SK-N-SH (cell line): ENCODE measurements at regions of chr12 and their contacts with region 1.

Region 1: DNA sequence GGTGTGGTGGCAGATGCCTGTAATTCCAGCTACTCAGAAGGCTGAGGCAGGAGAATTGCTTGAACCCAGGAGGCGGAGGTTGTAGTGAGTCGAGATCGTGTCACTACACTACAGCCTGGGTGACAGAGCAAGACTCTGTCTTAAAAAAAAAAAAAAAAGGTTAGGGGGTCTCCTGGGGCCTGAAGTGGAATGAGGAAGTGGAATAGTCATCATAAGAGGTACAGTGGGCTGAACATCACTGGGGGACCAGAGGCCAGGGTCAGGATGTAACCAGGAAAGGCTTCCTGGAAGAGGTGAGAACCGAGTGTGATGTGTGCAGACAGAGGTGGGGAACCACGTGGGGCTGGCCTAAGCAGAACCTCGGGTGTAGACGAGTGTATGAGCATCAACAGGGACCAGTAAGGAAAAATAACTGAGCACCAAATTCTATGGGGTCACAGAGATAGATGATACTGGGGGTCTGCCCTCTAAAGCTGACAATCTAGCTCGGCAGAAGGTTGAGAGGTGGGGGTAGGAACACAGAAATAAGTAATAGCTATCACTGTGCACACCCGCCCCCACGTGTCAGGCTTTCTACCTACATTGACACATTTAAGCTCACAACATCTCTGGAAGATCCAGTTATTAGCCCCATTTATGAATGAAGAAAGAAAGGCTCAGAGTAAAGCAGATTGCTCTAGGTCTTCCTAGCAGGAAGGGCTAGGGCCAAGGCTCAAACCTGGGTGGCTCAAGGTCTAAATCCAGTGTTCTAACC is 5.0 kb upstream of the COX6A1 start:
- DNase-seq: no peak
- H3K4me3 ChIP-seq: no peak overlapping the region
- H3K27ac ChIP-seq: no peak overlapping the region
- H3K4me1 ChIP-seq: no peaks in the 10 kb centered on the region
- H3K27me3 ChIP-seq: no peaks in the 10 kb centered on the region
- CTCF ChIP-seq: no peak
- EP300 ChIP-seq: no peak
- RAD21 ChIP-seq: no peak

Region 2: DNA sequence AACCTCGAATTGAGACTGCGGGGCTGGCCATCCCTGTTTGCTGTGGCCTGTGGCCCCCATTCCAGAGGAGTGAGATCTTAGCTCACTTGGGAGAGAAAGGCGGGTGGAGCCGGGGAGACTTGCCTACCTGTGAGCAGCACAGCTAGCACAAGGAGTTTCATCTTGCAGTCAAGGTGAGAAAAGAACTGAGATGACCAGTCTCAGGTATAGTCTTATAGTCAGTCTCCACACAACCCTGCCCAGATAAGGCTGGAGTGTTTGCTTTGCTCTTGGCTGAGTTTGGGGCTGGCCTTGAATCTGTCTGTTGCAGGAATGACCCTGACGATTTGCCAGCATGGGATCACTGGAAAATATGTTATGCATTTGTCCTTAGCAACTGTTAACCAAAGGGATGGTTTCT is 105.4 kb before region 1 on chr12 and contains the start of gene PLA2G1B:
- CTCF ChIA-PET with region 1: interaction called, 15 read pairs
- POLR2A ChIA-PET with region 1: interaction called, 4 read pairs
- DNase-seq: no peak
- H3K4me3 ChIP-seq: no peak within 1 kb of the TSS
- H3K27ac ChIP-seq: no peak within 1 kb of the TSS
- H3K4me1 ChIP-seq: no peaks in the 10 kb centered on the region
- H3K27me3 ChIP-seq: no peaks in the 10 kb centered on the region; the same call in 1 of the 2 replicates
- CTCF ChIP-seq: no peak
- EP300 ChIP-seq: no peak
- RAD21 ChIP-seq: no peak
- polyA plus RNA-seq, gene PLA2G1B: not detected in 2 replicates

Region 3: DNA sequence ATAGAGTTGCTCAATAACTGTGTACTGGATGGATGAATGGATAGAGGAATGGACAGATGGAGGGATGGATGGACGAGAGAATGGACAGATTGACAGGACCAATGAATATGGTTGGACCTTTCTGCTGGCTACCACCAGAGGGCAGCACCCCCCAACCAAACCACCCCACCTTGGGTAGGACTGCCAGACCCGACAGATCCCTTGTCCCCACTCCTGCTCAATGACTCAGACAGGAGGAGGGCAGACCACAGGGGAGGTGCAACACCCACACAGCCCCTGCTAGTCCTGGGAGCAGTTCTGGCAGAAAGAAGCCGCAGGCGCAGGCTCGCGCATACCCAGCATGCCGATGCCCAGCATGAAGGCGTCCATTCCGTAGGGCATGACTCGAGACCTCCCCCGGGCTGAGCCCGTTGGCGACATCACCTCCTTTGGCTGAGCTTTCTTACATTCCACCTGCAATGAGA is 76.3 kb before region 1 on chr12:
- CTCF ChIA-PET with region 1: interaction called, 95 read pairs
- POLR2A ChIA-PET with region 1: interaction called, 5 read pairs
- DNase-seq: peak; percentile 93
- H3K4me3 ChIP-seq: no peak overlapping the region
- H3K27ac ChIP-seq: no peak overlapping the region
- H3K4me1 ChIP-seq: peaks cover 0 to 5% of the 10 kb centered on the region in 2 experiments; a peak in 1 of 4 replicates
- H3K27me3 ChIP-seq: no peaks in the 10 kb centered on the region
- CTCF ChIP-seq: peak; percentile 93
- EP300 ChIP-seq: 0 out of 4 replicates have a peak, but pooled peaks of 1 of the 2 experiments have one; percentile 19
- RAD21 ChIP-seq: peak; percentile 95

Region 4: GRCh38 chr12:120388691-120389481 is 44.1 kb before region 1 on chr12:
- CTCF ChIA-PET with region 1: interaction called, 10 read pairs
- POLR2A ChIA-PET with region 1: no interaction called
- DNase-seq: no peak
- H3K4me3 ChIP-seq: no peak overlapping the region
- H3K27ac ChIP-seq: no peak overlapping the region
- H3K4me1 ChIP-seq: no peaks in the 10 kb centered on the region
- H3K27me3 ChIP-seq: no peaks in the 10 kb centered on the region; the same call in 1 of the 2 replicates
- CTCF ChIP-seq: no peak
- EP300 ChIP-seq: no peak
- RAD21 ChIP-seq: no peak

Region 5: DNA sequence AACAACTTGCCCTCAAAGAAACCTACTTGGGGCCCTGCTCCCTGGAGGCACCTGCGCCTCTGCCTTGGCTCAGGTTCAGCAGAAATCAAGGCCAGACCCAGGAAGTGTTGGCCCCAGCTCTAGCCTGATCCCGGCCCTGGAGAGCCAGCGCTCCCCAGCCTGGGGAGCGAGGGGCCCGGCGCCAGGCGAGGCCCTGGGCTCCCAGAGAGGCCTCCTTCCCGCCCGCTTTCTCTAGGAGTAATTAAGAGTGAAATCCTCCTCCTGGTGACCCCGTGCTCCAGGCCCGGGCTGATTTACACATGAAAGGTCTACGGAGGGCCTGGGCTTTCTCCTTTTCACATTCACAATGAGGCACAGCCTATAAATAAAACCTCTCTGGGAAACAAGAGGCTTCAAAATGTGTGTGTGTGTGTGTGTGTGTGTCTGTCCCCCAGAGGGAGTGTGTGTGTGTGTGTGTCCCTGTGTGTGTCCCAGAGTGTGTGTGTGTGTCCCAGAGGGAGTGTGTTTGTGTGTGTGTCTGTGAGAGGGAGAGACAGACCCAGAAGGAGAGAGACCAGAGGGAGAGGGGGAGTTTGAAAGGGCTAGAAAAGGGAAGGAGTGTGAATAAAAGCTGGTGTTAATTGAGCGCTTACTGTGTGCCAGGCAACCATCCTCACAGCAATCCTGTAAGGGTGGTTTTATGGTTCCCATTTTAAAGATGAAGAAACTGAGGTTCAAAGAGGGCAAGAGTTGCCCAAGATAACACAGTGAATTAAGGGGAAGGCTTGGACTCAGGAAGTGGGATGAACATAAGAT is 18.9 kb before region 1 on chr12:
- CTCF ChIA-PET with region 1: interaction called, 61 read pairs
- POLR2A ChIA-PET with region 1: no interaction called
- DNase-seq: no peak
- H3K4me3 ChIP-seq: no peak overlapping the region
- H3K27ac ChIP-seq: no peak overlapping the region
- H3K4me1 ChIP-seq: no peaks in the 10 kb centered on the region
- H3K27me3 ChIP-seq: no peaks in the 10 kb centered on the region; the same call in 1 of the 2 replicates
- CTCF ChIP-seq: no peak
- EP300 ChIP-seq: no peak
- RAD21 ChIP-seq: no peak

Region 6: DNA sequence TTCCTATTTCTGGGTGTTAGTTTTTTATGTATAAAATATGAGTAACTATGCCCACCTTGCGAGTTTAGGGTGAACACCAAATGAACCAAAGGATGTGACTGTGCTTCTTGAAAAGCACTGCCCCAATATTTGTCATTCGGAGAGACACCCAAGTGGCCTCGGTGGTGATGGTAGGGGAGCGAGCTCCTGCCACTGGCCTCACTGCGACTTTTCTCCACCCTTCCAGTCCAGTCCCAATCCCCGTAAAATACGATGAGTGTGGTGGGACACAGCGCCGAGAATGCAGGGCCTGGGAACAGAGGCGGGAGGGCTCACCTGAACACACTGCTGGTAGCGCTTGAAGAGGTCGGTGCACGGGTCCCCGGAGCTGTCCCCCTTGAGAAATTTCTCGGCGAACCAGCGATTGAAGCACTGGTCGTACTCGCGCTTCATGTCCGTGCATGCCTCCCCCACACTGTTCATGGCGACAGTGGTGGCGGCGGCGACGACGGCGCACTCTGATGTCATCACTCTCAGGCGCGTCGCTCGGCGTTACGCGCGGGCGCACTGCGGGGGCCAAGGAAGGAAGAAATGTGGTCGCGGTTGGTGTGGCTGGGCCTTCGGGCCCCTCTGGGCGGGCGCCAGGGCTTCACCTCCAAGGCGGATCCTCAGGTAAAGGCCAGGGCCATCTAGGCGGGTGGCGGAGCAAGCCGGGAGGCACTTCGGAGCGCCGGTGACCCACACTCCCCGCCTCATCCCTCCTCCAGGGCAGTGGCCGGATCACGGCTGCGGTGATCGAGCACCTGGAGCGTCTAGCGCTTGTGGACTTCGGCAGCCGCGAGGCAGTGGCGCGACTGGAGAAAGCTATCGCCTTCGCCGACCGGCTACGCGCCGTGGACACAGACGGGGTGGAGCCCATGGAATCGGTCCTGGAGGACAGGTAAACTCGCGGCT is 13.2 kb after region 1 on chr12 and contains the starts of genes GATC and TRIAP1:
- CTCF ChIA-PET with region 1: no interaction called
- POLR2A ChIA-PET with region 1: no interaction called
- DNase-seq: peak; percentile 91
- H3K4me3 ChIP-seq: peak within 1 kb of the TSS; percentile 65 to 98
- H3K27ac ChIP-seq: peak within 1 kb of the TSS; percentile 68 to 88
- H3K4me1 ChIP-seq: peaks cover 0 to 9% of the 10 kb centered on the region in 2 experiments; a peak in 2 of 4 replicates
- H3K27me3 ChIP-seq: no peaks in the 10 kb centered on the region
- CTCF ChIP-seq: no peak
- EP300 ChIP-seq: peak in 1 of 2 experiments; percentile 5; a peak in 1 of 4 replicates
- RAD21 ChIP-seq: no peak
- polyA plus RNA-seq, gene GATC: 10.6 and 12.4 TPM in 2 replicates
- polyA plus RNA-seq, gene TRIAP1: 34.1 and 48.2 TPM in 2 replicates

Region 7: GRCh38 chr12:120479458-120479857 is 46.5 kb after region 1 on chr12:
- CTCF ChIA-PET with region 1: no interaction called
- POLR2A ChIA-PET with region 1: no interaction called
- DNase-seq: no peak
- H3K4me3 ChIP-seq: no peak overlapping the region
- H3K27ac ChIP-seq: no peak overlapping the region
- H3K4me1 ChIP-seq: peaks cover 0 to 2% of the 10 kb centered on the region in 2 experiments; a peak in 1 of 4 replicates
- H3K27me3 ChIP-seq: no peaks in the 10 kb centered on the region
- CTCF ChIP-seq: no peak
- EP300 ChIP-seq: no peak
- RAD21 ChIP-seq: no peak

Region 8: DNA sequence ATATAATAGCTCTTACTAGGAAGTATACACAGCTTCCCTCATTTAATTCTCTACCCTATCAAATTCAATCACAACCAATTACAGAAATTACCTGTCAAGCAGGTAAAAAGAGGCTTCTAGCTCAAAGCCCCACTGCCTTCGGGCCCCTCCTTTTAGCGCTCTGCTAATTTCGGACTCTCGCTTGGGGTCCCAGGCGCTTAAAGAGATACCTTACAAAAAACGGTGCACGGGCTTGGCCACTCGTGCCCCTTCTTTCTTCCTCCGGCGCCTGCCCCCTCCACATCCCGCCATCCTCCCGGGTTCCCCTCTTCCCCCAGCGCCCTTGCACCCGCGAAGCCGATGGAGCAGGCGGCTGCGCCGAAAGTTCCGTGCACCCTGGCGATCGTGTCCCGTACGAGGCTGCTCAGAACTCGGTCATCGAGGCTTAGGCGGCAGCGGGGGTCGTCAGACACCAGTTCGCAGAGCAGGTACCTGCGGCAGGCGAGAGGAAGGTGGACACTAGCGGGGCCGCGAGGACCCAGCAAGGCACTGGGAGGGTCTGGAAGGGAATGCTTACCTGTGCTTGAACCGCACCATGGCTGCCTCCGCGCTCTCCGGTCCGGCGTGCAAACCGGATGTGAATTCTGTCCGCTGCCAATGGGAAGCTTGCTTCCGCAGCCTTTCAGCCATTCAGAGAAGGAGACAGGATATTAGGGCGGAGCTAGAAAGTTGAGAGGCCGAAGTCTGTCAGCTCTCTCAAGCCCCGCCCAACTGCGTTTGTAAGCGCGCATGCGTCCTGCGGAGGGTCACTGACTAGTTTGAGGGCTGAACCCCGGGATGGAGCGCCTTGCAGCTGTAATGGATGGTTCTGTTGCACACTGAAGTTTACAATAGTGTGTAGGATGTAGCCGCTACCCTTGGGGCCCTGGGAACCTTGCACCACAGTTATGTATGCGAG is 148.1 kb after region 1 on chr12 and contains the start of gene POP5:
- CTCF ChIA-PET with region 1: no interaction called
- POLR2A ChIA-PET with region 1: no interaction called
- DNase-seq: peak; percentile 93
- H3K4me3 ChIP-seq: peak within 1 kb of the TSS; percentile 82 to 97
- H3K27ac ChIP-seq: peak within 1 kb of the TSS; percentile 25 to 71; a peak in 3 of 4 replicates
- H3K4me1 ChIP-seq: peaks cover 0 to 8% of the 10 kb centered on the region in 2 experiments; a peak in 2 of 4 replicates
- H3K27me3 ChIP-seq: no peaks in the 10 kb centered on the region
- CTCF ChIP-seq: no peak
- EP300 ChIP-seq: no peak
- RAD21 ChIP-seq: no peak
- polyA plus RNA-seq, gene POP5: 129 and 148 TPM in 2 replicates